Activated B cell treated with CpG ODN at 0.5 μM for 24 hours (primary cell): ENCODE measurements at regions of chr17 and their contacts with region 1.

Region 1: DNA sequence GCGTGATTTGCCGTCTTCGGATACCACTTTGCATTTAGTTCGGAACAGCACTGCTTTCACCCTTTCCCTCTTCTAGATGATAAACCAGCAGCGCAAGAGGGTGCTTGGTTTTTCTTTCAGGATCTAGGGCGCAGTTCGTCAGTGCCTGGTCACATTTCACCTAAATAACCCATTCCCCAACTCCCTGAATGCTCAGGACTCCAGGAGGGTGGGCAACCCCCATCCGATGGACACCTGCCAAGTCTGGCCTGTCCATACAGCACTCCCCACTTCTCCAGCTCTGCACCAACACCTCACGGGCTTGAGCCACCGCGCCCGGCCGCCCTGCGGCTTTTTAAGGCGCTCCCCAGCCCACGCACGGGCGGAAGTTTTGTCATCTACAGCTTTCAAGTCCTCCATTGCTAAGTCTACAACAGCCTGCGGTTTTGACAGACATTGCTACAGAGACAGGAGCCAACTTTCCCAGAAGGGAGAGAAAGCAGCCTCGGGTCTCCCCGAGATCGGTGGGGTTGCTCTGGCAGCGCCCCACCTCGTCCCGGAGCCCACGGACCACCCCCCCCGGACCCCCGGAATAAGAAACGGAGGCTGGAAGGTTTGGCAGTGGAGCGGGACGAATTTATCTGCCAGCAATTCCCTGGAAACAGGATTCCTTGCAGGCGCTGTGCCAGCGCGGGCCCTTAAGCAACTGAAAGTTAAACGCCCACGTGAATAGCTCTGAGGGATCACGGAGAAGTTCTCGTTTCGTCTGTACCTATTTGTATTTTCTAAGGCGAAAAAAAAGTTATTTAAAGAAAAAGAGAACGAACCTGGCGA is 38.6 kb upstream of the SLFN13 start:
- DNase-seq: peak; percentile 47
- ATAC-seq: peak; percentile 49
- H3K4me3 Mint-ChIP-seq: peak overlapping the region; percentile 94
- H3K27ac Mint-ChIP-seq: peak overlapping the region; percentile 76
- H3K4me1 Mint-ChIP-seq: peaks cover 28% of the 10 kb centered on the region
- H3K27me3 Mint-ChIP-seq: peaks cover 40% of the 10 kb centered on the region
- CTCF ChIP-seq: no peak

Region 2: DNA sequence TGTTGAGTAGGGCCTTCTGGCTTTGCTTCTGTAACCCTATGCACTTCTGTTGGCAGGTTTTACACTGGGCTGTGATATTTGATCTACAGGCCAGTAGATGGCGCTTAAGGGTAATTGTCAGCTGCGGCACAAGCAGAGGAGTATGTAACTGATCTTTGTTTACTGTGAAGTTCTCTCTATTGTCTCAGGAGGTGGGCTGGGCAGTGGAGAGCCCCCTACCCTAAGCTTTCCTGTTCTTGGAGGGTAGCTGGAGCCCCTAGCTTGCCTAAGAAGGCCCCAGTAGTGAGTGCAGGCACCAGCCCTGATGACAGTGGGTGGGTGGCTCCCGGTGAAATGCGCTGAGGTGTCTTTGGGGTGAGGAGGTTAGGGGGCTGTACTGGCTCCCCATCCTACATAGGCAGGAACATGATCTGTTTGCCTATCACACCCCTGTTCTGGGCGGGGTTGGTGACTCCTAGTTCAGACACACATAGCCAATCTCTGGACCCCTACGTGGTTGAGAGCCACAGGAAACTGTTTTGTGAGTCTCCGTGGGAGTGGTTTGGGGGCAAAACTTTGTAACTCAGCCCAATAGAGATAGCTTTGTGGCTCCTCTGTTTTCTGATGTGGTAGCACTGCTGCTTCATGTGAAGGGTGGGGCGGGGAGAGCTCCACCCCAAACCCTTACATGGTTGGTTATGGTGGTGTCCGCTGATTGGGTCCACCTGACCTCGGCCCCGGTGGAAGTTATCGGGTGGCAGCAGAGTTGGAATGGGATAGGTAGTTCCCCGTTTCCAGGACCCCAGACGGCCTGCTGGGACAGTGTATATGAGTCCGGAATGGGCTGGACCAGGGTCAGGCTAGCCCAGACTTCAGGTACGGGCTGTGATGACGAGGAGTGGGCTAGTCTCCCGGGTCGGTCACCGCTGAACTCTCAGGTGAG is 174.1 kb before region 1 on chr17:
- CTCF ChIA-PET with region 1: interaction called, 49 read pairs
- POLR2A ChIA-PET with region 1: interaction called, 15 read pairs
- intact Hi-C with region 1: loop called (anchors 1 kb)
- DNase-seq: peak; percentile 53
- ATAC-seq: peak; percentile 87
- H3K4me3 Mint-ChIP-seq: peak overlapping the region; percentile 87
- H3K27ac Mint-ChIP-seq: peak overlapping the region; percentile 81
- H3K4me1 Mint-ChIP-seq: peaks cover 18% of the 10 kb centered on the region
- H3K27me3 Mint-ChIP-seq: no peaks in the 10 kb centered on the region
- CTCF ChIP-seq: peak; percentile 62

Region 3: GRCh38 chr17:35373534-35373983 is 113.6 kb before region 1 on chr17 and contains the start of gene SLFN11:
- CTCF ChIA-PET with region 1: no interaction called
- POLR2A ChIA-PET with region 1: interaction called, 7 read pairs
- intact Hi-C with region 1: loop called (anchors 1 kb)
- DNase-seq: peak; percentile 55
- ATAC-seq: peak; percentile 76
- H3K4me3 Mint-ChIP-seq: peak within 1 kb of the TSS; percentile 99
- H3K27ac Mint-ChIP-seq: peak within 1 kb of the TSS; percentile 98
- H3K4me1 Mint-ChIP-seq: peaks cover 50% of the 10 kb centered on the region
- H3K27me3 Mint-ChIP-seq: no peaks in the 10 kb centered on the region
- CTCF ChIP-seq: no peak
- total RNA-seq, gene SLFN11: 19.2 and 22.4 TPM in 2 replicates

Region 4: GRCh38 chr17:35448214-35448898 is 38.8 kb before region 1 on chr17 and contains the start of gene SLFN13:
- CTCF ChIA-PET with region 1: no interaction called
- POLR2A ChIA-PET with region 1: interaction called, 18 read pairs
- intact Hi-C with region 1: loop called (anchors 1 kb)
- DNase-seq: peak; percentile 69
- ATAC-seq: peak; percentile 87
- H3K4me3 Mint-ChIP-seq: peak within 1 kb of the TSS; percentile 89
- H3K27ac Mint-ChIP-seq: peak within 1 kb of the TSS; percentile 84
- H3K4me1 Mint-ChIP-seq: peaks cover 23% of the 10 kb centered on the region
- H3K27me3 Mint-ChIP-seq: no peaks in the 10 kb centered on the region
- CTCF ChIP-seq: no peak
- total RNA-seq, gene SLFN13: 14.8 and 15.3 TPM in 2 replicates

Region 5: GRCh38 chr17:35498448-35499178 is 11.5 kb after region 1 on chr17:
- CTCF ChIA-PET with region 1: no interaction called
- POLR2A ChIA-PET with region 1: interaction called, 5 read pairs
- intact Hi-C with region 1: loop called (anchors 1 kb)
- DNase-seq: no peak
- ATAC-seq: no peak
- H3K4me3 Mint-ChIP-seq: no peak overlapping the region
- H3K27ac Mint-ChIP-seq: no peak overlapping the region
- H3K4me1 Mint-ChIP-seq: peaks cover 17% of the 10 kb centered on the region
- H3K27me3 Mint-ChIP-seq: peaks cover 56% of the 10 kb centered on the region
- CTCF ChIP-seq: no peak